ENCODE measurements at regions of chr5 and their contacts with region 1.

Region 1: GRCh38 chr5:157148734-157149615 is 6.3 kb upstream of the MED7 start:
- DNase-seq: peak; percentile 68 to 86 (median 79)
- H3K4me3 ChIP-seq: no peak overlapping the region
- H3K4me3 Mint-ChIP-seq: peak overlapping the region in 3 of 7 donors; percentile 13 to 71 (median 25)
- H3K27ac ChIP-seq: no peak overlapping the region
- H3K27ac Mint-ChIP-seq: peak overlapping the region; percentile 37 to 94 (median 76)
- H3K4me1 ChIP-seq: peaks cover 34% of the 10 kb centered on the region
- H3K4me1 Mint-ChIP-seq: peaks cover 28 to 40% (median 40%) of the 10 kb centered on the region in 3 donors
- H3K27me3 ChIP-seq: no peaks in the 10 kb centered on the region
- H3K27me3 Mint-ChIP-seq: no peaks in the 10 kb centered on the region

Region 2: DNA sequence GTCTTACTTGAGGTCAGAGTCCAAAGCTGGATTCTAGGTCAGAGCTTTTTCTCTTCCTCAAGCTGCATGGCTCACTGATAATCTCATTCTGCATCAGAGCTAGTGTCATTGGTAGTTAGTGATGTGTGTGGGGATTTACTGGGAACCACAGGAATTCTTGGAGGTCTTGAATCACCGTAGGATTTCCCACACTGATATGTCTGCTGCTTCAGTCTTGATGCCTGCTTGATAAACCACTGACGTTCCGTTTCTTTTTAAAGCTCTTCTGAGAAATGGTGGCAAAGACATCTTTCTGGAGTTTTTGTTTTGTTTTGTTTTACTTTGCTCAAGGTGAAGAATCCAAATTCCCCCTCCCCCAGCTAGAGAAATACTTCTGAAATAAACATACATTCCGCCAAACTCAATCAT is 18.2 kb after region 1 on chr5:
- CTCF ChIA-PET with region 1: interaction called, 14 read pairs
- POLR2A ChIA-PET with region 1: interaction called, 4 read pairs
- DNase-seq: no peak
- H3K4me3 ChIP-seq: no peak overlapping the region
- H3K4me3 Mint-ChIP-seq: peak overlapping the region in 6 of 7 donors; percentile 42 to 74 (median 59)
- H3K27ac ChIP-seq: no peak overlapping the region
- H3K27ac Mint-ChIP-seq: peak overlapping the region; percentile 44 to 96 (median 84)
- H3K4me1 ChIP-seq: peaks cover 28% of the 10 kb centered on the region
- H3K4me1 Mint-ChIP-seq: peaks cover 37 to 71% (median 52%) of the 10 kb centered on the region in 3 donors
- H3K27me3 ChIP-seq: no peaks in the 10 kb centered on the region
- H3K27me3 Mint-ChIP-seq: no peaks in the 10 kb centered on the region

Region 3: GRCh38 chr5:157189223-157189622 is 40.2 kb after region 1 on chr5:
- CTCF ChIA-PET with region 1: interaction called, 46 read pairs
- POLR2A ChIA-PET with region 1: interaction called, 5 read pairs
- DNase-seq: no peak
- H3K4me3 ChIP-seq: peak overlapping the region; percentile 44
- H3K4me3 Mint-ChIP-seq: peak overlapping the region; percentile 84 to 100 (median 97)
- H3K27ac ChIP-seq: no peak overlapping the region
- H3K27ac Mint-ChIP-seq: peak overlapping the region; percentile 79 to 97 (median 92)
- H3K4me1 ChIP-seq: peaks cover 88% of the 10 kb centered on the region
- H3K4me1 Mint-ChIP-seq: peaks cover 86 to 96% (median 92%) of the 10 kb centered on the region in 3 donors
- H3K27me3 ChIP-seq: no peaks in the 10 kb centered on the region
- H3K27me3 Mint-ChIP-seq: no peaks in the 10 kb centered on the region

Region 4: DNA sequence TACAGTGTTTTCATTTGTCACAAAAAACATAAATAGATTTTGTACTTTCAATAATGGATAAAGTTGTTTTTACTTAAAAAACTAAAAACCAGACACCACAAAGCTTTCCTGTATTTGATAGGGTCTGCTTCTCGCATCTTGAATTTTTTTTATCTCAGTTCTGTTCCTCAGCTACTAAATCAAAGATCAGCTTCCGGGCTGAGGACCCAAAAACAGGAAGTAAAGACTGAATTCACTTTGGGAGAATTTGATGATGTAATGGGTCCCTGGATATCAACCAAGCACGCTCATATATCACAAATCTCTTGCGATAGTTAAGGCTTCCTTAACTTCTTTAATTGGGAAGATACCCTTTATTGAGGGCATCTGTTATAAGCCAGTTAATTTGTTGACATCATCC is 55.8 kb after region 1 on chr5:
- CTCF ChIA-PET with region 1: interaction called, 13 read pairs
- POLR2A ChIA-PET with region 1: interaction called, 8 read pairs
- DNase-seq: peak in 1 of 5 donors; percentile 76
- H3K4me3 ChIP-seq: peak overlapping the region; percentile 2
- H3K4me3 Mint-ChIP-seq: peak overlapping the region; percentile 48 to 72 (median 69)
- H3K27ac ChIP-seq: peak overlapping the region; percentile 45
- H3K27ac Mint-ChIP-seq: peak overlapping the region; percentile 78 to 96 (median 87)
- H3K4me1 ChIP-seq: peaks cover 95% of the 10 kb centered on the region
- H3K4me1 Mint-ChIP-seq: peaks cover 71 to 95% (median 94%) of the 10 kb centered on the region in 3 donors
- H3K27me3 ChIP-seq: no peaks in the 10 kb centered on the region
- H3K27me3 Mint-ChIP-seq: peaks cover 0 to 3% of the 10 kb centered on the region in 2 donors

Region 5: DNA sequence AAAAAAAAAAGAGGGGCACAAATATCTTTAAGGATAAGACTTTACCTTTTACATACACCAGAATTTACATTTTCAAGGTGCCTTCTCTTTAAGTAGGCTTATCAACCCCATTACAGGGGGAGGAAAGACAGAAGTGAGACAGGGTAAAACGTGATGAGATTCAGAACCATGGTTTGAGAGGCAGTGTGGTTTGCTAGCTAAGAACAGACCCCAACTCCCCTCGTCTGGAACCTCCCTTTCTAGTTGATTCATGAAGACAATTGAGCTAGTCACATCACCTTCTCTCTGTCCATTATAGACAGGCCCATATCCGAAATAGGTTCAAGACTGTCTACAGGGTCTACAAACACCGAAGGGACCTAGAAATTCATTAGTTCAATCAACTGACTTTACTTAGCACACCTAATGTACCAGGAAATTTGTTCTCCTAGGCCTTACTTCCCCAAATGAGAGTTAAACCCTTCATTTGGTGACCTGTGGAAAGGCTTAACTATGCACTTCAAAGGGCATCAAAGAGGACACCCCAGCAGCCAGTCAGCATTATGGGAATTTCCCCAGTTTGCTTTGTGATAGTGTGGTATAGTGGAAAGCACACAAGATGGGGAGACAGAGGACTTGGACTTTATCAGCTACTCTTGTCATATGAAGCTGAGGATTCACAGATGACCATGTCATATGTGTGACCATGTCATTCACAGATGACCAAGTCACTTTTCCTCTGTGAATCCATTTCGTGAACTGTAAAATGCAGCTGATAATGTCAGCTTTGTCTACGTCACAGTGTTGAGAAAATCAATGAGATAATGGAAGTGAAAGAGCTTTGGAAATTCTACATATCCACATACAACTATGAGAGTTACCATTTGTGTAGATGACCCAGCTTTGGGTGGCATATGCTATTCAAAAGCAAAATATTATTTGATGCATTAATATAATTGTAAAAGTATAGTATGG is 76.8 kb after region 1 on chr5:
- CTCF ChIA-PET with region 1: interaction called, 10 read pairs
- POLR2A ChIA-PET with region 1: interaction called, 3 read pairs
- DNase-seq: peak in 1 of 5 donors; percentile 19
- H3K4me3 ChIP-seq: no peak overlapping the region
- H3K4me3 Mint-ChIP-seq: peak overlapping the region in 6 of 7 donors; percentile 12 to 66 (median 50)
- H3K27ac ChIP-seq: no peak overlapping the region
- H3K27ac Mint-ChIP-seq: peak overlapping the region; percentile 74 to 93 (median 88)
- H3K4me1 ChIP-seq: peaks cover 77% of the 10 kb centered on the region
- H3K4me1 Mint-ChIP-seq: peaks cover 49 to 81% (median 71%) of the 10 kb centered on the region in 3 donors
- H3K27me3 ChIP-seq: no peaks in the 10 kb centered on the region
- H3K27me3 Mint-ChIP-seq: no peaks in the 10 kb centered on the region

Region 6: DNA sequence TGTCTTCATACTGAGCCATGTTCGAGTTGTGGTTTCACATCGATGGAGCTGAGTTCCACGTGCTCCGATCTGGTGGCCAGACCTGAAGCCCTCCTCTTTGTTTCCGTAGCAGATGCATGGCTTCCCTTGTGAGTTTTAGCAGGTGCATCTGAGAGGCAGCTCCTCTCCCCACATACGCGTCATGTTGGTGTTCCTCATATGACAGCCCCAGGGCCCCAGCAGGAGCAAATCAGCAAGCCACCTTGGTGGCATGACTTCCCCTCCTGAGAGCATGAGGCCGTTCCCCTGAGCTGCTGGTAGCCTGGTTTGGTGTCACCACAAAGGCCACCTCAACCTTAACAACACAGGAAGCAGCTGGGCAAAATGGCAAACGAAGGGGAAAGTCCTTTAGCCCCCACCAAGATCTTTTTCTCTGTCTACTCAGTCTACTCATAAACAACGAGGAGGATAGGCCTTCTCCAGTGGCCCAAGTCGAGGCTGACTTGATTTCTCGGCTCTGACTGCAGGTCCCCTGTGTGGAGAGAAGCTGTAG is 122.8 kb after region 1 on chr5:
- CTCF ChIA-PET with region 1: interaction called, 13 read pairs
- POLR2A ChIA-PET with region 1: interaction called, 25 read pairs
- DNase-seq: peak; percentile 71 to 95 (median 94)
- H3K4me3 ChIP-seq: peak overlapping the region; percentile 33
- H3K4me3 Mint-ChIP-seq: peak overlapping the region; percentile 74 to 89 (median 79)
- H3K27ac ChIP-seq: peak overlapping the region; percentile 57
- H3K27ac Mint-ChIP-seq: peak overlapping the region; percentile 96 to 99 (median 98)
- H3K4me1 ChIP-seq: peaks cover 94% of the 10 kb centered on the region
- H3K4me1 Mint-ChIP-seq: peaks cover 92 to 98% (median 95%) of the 10 kb centered on the region in 3 donors
- H3K27me3 ChIP-seq: no peaks in the 10 kb centered on the region
- H3K27me3 Mint-ChIP-seq: no peaks in the 10 kb centered on the region